Activated CD4-positive, alpha-beta T cell treated with anti-CD3 and anti-CD28 coated beads for 36 hours (primary cell): ENCODE measurements at regions of chr17 and their contacts with region 1.

Region 1: DNA sequence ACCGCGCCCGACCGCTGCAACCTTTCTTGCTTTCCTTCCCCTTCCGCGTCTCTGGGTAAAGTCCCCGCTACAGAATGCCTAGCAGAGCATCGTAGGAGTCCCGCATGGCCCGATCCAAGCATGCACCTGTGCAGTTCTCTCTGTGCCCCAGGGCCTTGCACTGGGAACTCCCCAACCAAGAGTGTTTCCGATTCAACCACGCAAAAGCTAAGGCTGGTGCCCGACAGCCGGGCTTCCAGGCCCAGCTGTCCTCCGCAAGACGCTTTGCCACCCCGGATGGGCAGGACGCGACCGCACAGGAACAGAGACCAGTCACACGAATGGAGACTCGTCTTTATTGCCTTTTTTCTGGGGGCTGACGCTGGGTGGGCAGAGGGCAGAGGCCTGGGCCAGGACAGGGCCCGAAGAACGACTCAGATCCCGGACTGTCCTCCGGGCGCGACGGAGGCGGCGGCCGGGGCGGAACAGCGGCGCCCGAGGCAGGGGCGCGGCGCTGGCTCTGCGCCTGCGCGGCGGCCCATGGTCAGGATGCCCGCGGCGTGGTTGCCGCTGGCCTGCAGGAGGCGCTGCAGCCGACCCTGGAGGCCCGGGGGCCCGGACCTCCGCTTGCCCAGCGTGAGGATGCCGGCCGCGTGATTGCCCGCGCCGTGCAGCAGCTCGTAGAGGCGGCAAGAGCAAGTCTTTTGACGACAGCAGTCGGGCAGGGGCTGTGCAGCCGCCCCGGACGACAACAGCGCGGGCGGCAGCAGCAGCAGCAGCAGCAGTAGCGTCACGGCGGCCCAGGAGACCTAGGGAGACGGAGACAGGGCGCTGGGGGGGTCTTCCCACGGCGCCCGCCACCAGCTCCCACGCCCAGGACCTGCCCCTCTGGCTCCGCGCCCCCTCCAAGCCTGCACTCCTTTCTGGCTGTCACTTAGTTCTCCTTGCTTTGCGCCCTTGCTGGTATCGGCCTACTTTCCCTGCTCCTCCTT is 1.2 kb downstream of the HCRT start:
- DNase-seq: peak; percentile 89
- ATAC-seq: peak; percentile 70
- H3K4me3 Mint-ChIP-seq: peak overlapping the region; percentile 91
- H3K27ac Mint-ChIP-seq: peak overlapping the region; percentile 88
- H3K4me1 Mint-ChIP-seq: peaks cover 46% of the 10 kb centered on the region
- H3K27me3 Mint-ChIP-seq: peaks cover 7% of the 10 kb centered on the region

Region 2: GRCh38 chr17:41918314-41919164 is 265.5 kb before region 1 on chr17 and contains the start of gene ACLY:
- CTCF ChIA-PET with region 1: no interaction called
- POLR2A ChIA-PET with region 1: no interaction called
- intact Hi-C with region 1: loop called in 1 of 2 experiments (anchors 1 kb)
- DNase-seq: peak; percentile 98
- ATAC-seq: peak; percentile 99
- H3K4me3 Mint-ChIP-seq: peak within 1 kb of the TSS; percentile 90
- H3K27ac Mint-ChIP-seq: peak within 1 kb of the TSS; percentile 80
- H3K4me1 Mint-ChIP-seq: peaks cover 37% of the 10 kb centered on the region
- H3K27me3 Mint-ChIP-seq: no peaks in the 10 kb centered on the region
- total RNA-seq, gene ACLY: 189 to 192 TPM

Region 3: GRCh38 chr17:42002792-42003301 is 181.2 kb before region 1 on chr17:
- CTCF ChIA-PET with region 1: no interaction called
- POLR2A ChIA-PET with region 1: no interaction called
- intact Hi-C with region 1: no loop called
- DNase-seq: no peak
- ATAC-seq: no peak
- H3K4me3 Mint-ChIP-seq: no peak overlapping the region
- H3K27ac Mint-ChIP-seq: no peak overlapping the region
- H3K4me1 Mint-ChIP-seq: peaks cover 16% of the 10 kb centered on the region
- H3K27me3 Mint-ChIP-seq: no peaks in the 10 kb centered on the region

Region 4: GRCh38 chr17:42097691-42098631 is 86.1 kb before region 1 on chr17 and contains the start of gene ZNF385C:
- CTCF ChIA-PET with region 1: no interaction called
- POLR2A ChIA-PET with region 1: no interaction called
- intact Hi-C with region 1: no loop called
- DNase-seq: peak; percentile 66
- ATAC-seq: peak; percentile 72
- H3K4me3 Mint-ChIP-seq: no peak within 1 kb of the TSS
- H3K27ac Mint-ChIP-seq: peak within 1 kb of the TSS; percentile 31
- H3K4me1 Mint-ChIP-seq: peaks cover 8% of the 10 kb centered on the region
- H3K27me3 Mint-ChIP-seq: peaks cover 16% of the 10 kb centered on the region
- total RNA-seq, gene ZNF385C: 0.23 to 0.30 TPM

Region 5: GRCh38 chr17:42112552-42113176 is 71.4 kb before region 1 on chr17 and contains the start of gene DHX58:
- CTCF ChIA-PET with region 1: interaction called, 6 read pairs
- POLR2A ChIA-PET with region 1: no interaction called
- intact Hi-C with region 1: loop called in 1 of 2 experiments (anchors 1 kb)
- DNase-seq: peak; percentile 89
- ATAC-seq: peak; percentile 86
- H3K4me3 Mint-ChIP-seq: peak within 1 kb of the TSS; percentile 77
- H3K27ac Mint-ChIP-seq: peak within 1 kb of the TSS; percentile 97
- H3K4me1 Mint-ChIP-seq: peaks cover 35% of the 10 kb centered on the region
- H3K27me3 Mint-ChIP-seq: no peaks in the 10 kb centered on the region
- total RNA-seq, gene DHX58: 23.8 to 31.1 TPM

Region 6: GRCh38 chr17:42193969-42194899 is 10.2 kb after region 1 on chr17 and contains the start of gene GHDC:
- CTCF ChIA-PET with region 1: interaction called, 17 read pairs
- POLR2A ChIA-PET with region 1: interaction called, 11 read pairs
- intact Hi-C with region 1: loop called (anchors 1 kb)
- DNase-seq: peak; percentile 88
- ATAC-seq: peak; percentile 98
- H3K4me3 Mint-ChIP-seq: peak within 1 kb of the TSS; percentile 91
- H3K27ac Mint-ChIP-seq: peak within 1 kb of the TSS; percentile 94
- H3K4me1 Mint-ChIP-seq: peaks cover 15% of the 10 kb centered on the region
- H3K27me3 Mint-ChIP-seq: no peaks in the 10 kb centered on the region
- total RNA-seq, gene GHDC: 11.3 to 15.5 TPM

Region 7: DNA sequence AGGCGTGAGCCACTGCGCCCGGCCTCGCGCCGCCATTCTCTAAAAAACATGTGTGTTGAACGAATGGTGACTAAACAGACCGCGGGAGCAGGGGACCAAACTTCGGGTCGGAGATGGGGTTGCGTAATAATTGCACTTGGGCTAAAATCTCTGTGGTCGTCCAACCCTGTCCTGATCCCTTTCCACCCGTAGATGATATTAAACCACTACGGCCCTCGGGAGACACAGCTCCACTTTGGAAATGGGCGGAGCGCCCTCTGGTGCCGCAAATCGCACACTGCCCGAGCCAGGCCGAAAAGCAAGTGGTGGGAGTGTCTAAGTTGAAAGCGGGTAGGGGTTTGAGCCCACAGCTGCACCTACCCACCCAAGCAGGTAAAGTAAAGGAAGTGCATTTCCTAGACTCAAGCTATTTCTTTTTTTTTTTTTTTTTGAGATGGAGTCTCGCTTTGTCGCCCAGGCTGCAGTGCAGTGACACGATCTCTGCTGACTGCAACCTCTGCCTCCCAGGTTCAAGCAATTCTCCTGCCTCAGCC is 222.0 kb after region 1 on chr17:
- CTCF ChIA-PET with region 1: interaction called, 5 read pairs
- POLR2A ChIA-PET with region 1: no interaction called
- intact Hi-C with region 1: loop called (anchors 1 to 5 kb)
- DNase-seq: peak; percentile 91
- ATAC-seq: peak; percentile 69
- H3K4me3 Mint-ChIP-seq: no peak overlapping the region
- H3K27ac Mint-ChIP-seq: no peak overlapping the region
- H3K4me1 Mint-ChIP-seq: peaks cover 19% of the 10 kb centered on the region
- H3K27me3 Mint-ChIP-seq: no peaks in the 10 kb centered on the region

Region 8: DNA sequence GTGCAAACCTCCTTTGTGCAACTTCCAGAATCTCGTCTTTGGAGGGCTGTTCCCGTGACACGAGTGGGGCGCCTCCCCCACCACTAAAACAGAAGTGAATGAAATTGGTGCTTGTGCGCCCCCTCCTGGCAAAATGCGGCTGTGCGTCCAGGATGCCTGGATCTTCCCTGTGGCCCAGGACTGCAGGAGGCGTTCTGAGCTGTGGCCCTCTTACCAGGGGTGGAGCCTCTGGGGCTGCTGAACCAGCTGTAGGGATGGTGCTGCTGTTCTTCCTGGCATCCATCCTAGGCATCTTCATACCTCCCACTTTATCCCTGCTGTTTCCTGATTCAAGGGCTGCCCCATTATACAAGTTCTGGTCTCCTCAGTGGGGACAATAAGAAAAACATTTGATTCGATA is 333.5 kb after region 1 on chr17:
- CTCF ChIA-PET with region 1: no interaction called
- POLR2A ChIA-PET with region 1: no interaction called
- intact Hi-C with region 1: loop called in 1 of 2 experiments (anchors 5 kb)
- DNase-seq: peak; percentile 89
- ATAC-seq: peak; percentile 92
- H3K4me3 Mint-ChIP-seq: no peak overlapping the region
- H3K27ac Mint-ChIP-seq: no peak overlapping the region
- H3K4me1 Mint-ChIP-seq: peaks cover 4% of the 10 kb centered on the region
- H3K27me3 Mint-ChIP-seq: peaks cover 2% of the 10 kb centered on the region